Panc1 (cell line): ENCODE measurements at regions of chr7 and their contacts with region 1.

Region 1: GRCh38 chr7:74097937-74098614 is 14.5 kb downstream of the LIMK1 start:
- DNase-seq: peak; percentile 74
- ATAC-seq: peak; percentile 37; the same call in 1 of the 2 replicates
- H3K4me3 ChIP-seq: no peak overlapping the region
- H3K27ac ChIP-seq: peak overlapping the region; percentile 35
- H3K4me1 ChIP-seq: peaks cover 22% of the 10 kb centered on the region
- H3K27me3 ChIP-seq: no peaks in the 10 kb centered on the region
- CTCF ChIP-seq: no peak

Region 2: DNA sequence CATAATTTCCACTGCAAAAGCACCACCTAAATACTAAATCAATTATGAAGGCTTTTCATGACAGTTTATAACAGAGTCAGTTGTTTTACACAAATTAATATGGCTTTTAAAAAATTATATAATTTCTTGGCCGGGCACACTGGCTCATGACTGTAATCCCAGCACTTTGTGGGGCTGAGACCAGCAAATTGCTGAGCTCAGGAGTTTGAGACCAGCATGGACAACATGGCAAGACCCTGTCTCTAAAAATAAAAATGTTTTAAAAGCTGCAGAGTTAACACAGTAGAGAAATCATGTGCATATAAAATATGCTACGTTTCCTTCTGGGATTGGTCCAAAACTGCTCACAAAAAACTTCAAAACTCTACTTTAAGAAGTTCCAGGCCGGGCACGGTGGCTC is 32.4 kb after region 1 on chr7:
- CTCF ChIA-PET with region 1: no interaction called
- POLR2A ChIA-PET with region 1: interaction called, 12 read pairs
- in situ Hi-C with region 1: no loop called
- intact Hi-C with region 1: no loop called
- DNase-seq: no peak
- ATAC-seq: no peak
- H3K4me3 ChIP-seq: no peak overlapping the region
- H3K27ac ChIP-seq: no peak overlapping the region
- H3K4me1 ChIP-seq: no peaks in the 10 kb centered on the region
- H3K27me3 ChIP-seq: no peaks in the 10 kb centered on the region
- CTCF ChIP-seq: no peak